Left lung (tissue), 14 donors: ENCODE measurements at regions of chr17 and their contacts with region 1.

Region 1: DNA sequence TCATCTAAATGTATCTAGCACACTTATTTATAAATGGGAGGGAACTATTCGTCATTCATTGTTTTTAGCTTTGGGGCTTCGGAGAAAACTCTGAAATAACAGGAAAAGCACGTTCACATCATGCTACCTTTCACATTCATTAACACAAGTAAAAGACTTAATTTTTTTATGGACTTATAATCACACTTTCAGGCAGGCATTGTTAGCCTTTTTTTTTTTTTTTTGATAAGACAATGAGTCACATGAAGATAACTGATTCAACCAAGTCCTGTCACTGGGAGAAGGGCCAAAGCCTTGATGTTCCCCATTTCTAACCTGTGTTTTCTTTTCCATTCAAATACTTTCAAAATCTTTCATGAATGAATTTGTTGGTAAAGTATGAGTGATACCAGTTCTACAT is 631.3 kb upstream of the CA10 start:
- DNase-seq: no peak
- ATAC-seq: no peak
- H3K4me3 ChIP-seq: no peak overlapping the region
- H3K27ac ChIP-seq: no peak overlapping the region
- H3K4me1 ChIP-seq: no peaks in the 10 kb centered on the region
- H3K27me3 ChIP-seq: no peaks in the 10 kb centered on the region
- CTCF ChIP-seq: no peak

Region 2: DNA sequence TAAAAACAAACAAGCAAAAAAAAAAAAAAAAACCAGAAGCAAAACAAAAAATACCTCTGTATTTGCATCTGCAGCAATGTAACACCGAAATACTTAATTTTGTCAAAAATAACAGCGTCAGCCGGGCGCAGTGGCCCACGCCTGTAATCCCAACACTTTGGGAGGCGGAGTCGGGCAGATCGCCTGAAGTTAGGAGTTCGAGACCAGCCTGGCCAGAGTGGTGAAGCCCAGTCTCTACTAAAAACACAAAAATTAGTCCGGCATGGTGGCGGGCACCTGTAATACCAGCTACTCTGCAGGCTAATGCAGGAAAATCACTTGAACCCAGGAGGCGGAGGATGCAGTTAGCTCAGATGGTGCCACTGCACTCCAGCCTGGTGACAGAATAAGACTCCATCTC is 52.1 kb after region 1 on chr17:
- intact Hi-C with region 1: loop called in 1 of 2 experiments (anchors 10 kb)
- DNase-seq: peak in 1 of 4 donors; percentile 43
- ATAC-seq: no peak
- H3K4me3 ChIP-seq: no peak overlapping the region
- H3K27ac ChIP-seq: no peak overlapping the region
- H3K4me1 ChIP-seq: no peaks in the 10 kb centered on the region
- H3K27me3 ChIP-seq: no peaks in the 10 kb centered on the region
- CTCF ChIP-seq: no peak